CD8-positive, alpha-beta memory T cell (primary cell): ENCODE measurements at regions of chr1 and their contacts with region 1.

Region 1: DNA sequence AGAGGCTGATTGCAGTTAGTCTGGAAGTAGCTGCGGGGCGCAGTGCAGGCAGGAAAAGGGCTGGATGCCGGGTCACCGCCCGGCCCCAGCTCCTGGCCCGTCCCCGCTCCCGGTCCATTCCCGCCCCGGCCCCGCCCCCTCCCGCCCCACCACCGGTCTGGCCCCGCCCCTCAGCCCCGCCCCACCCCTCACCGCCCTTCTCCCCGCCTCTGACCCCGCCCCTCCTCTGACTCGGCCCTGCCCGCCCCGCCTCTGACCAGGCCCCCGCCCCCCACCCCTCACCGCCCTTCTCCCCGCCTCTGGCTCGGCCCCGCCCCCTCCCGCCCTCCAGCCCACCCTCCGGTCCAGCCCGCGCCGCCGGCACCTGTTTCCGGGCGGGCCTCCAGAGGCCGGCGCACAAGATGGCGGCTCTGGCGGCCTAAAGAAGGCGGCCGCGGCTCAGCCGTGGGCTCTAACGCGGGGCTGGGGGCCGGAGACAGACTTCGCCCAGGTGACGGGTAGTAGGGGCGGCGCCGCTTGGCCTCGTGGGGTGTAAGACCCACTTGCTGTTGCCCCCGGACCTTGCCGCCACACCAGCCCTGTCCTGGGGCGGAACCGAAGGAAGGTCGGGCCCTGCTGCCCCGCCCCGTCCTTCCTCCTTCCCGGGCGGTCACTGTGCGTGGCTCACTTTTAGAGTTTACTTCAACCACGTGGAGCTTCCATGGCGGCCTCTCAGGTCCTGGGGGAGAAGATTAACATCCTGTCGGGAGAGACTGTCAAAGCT is at the start of gene UBIAD1:
- DNase-seq: peak; percentile 77 to 89 (median 80)
- H3K4me3 ChIP-seq: peak within 1 kb of the TSS; percentile 96
- H3K4me3 Mint-ChIP-seq: peak within 1 kb of the TSS; percentile 93 to 100 (median 94)
- H3K27ac ChIP-seq: peak within 1 kb of the TSS; percentile 90
- H3K27ac Mint-ChIP-seq: peak within 1 kb of the TSS; percentile 76 to 99 (median 94)
- H3K4me1 ChIP-seq: peaks cover 25% of the 10 kb centered on the region
- H3K4me1 Mint-ChIP-seq: peaks cover 27 to 41% (median 40%) of the 10 kb centered on the region in 3 donors
- H3K27me3 ChIP-seq: no peaks in the 10 kb centered on the region
- H3K27me3 Mint-ChIP-seq: peaks cover 0 to 3% of the 10 kb centered on the region in 2 donors
- total RNA-seq, gene UBIAD1: 35.7 to 41.8 TPM

Region 2: DNA sequence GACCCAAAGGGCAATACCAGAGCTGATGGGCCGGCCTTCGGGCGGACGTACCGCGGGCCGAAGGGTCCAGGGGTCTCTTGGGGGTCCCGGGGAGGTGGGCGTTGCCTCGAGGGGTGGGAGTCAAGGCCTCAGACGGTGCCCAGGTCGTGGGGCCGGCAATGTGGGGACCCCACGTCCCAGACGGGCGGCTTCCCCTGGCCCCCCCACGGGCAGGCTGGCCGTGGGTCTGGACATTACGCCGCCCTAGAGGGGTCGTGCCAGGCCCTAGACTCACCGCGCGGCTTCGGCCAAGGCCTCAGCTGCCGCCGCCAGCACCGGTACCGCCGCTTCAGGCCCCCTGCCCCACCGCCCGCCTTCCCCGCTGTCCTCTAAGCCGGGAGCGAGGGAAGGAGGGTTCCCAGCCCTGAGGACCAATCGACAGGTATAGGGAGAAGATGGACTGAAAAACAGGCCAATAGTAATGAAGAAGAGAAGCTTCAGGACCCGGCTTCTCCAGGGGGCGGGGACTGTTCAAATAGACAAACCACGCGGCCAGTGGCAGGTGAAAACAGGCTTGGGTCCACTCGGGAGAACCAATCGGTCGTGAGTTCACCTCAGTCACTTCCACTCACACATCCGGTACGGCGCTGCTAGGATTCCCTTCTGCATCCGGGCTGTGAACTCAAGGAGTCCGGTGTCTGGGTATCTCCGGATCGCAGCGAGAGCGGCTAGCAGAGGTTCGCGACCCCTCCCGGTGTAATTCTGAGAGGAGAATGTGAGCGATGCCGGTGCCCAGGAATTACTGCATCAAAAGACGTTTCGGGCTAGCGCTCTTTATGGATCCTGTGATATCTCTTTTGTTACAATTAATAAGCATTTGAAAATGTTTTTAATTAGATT is 10.6 kb before region 1 on chr1 and contains the start of gene MTOR:
- CTCF ChIA-PET with region 1: interaction called, 7 read pairs
- POLR2A ChIA-PET with region 1: interaction called, 23 read pairs
- DNase-seq: peak; percentile 93 to 98 (median 97)
- H3K4me3 ChIP-seq: peak within 1 kb of the TSS; percentile 92
- H3K4me3 Mint-ChIP-seq: peak within 1 kb of the TSS; percentile 83 to 94 (median 91)
- H3K27ac ChIP-seq: peak within 1 kb of the TSS; percentile 76
- H3K27ac Mint-ChIP-seq: peak within 1 kb of the TSS; percentile 51 to 98 (median 92)
- H3K4me1 ChIP-seq: peaks cover 15% of the 10 kb centered on the region
- H3K4me1 Mint-ChIP-seq: peaks cover 14 to 29% (median 23%) of the 10 kb centered on the region in 3 donors
- H3K27me3 ChIP-seq: no peaks in the 10 kb centered on the region
- H3K27me3 Mint-ChIP-seq: no peaks in the 10 kb centered on the region
- total RNA-seq, gene MTOR: 53.9 to 55.2 TPM